HepG2 (cell line): ENCODE measurements at regions of chrX and their contacts with region 1.

Region 1: DNA sequence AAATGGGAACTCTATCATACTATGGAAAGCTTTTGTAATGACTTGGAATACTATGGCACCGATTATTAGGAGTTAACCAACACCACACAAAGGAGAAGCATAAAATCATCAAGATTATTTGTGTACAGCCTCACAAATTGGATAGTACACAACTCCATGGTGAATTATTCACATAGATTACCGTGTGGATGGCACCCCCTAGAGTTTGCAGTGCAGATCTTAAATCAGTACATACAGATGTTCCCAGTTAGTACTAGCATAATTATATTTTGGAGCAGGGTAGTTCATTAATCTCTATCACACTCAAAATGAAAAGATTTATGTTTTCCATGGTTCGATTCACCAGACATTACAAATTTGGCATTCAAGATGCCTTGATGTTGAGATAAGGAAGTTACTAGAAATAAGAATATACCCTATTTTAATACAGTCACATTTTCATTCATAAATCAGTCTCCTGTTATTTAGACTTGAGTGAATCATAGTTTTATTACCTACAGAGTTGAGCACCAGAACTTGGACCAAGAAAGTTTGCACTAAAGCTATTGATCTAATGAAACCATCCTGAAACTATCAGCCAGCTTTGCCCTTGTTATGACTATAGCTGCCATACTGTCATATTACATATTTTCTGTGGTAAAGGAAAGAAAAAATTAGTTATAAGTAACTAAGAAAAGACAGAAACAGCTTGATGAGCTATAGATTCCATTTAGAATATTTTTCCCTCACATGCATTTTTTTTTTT is 531.8 kb downstream of the GLUD2 start:
- DNase-seq: peak; percentile 7
- ATAC-seq: peak; percentile 56; the same call in 2 of the 3 replicates
- H3K4me3 ChIP-seq: no peak overlapping the region
- H3K27ac ChIP-seq: no peak overlapping the region
- H3K4me1 ChIP-seq: no peaks in the 10 kb centered on the region
- H3K27me3 ChIP-seq: no peaks in the 10 kb centered on the region
- CTCF ChIP-seq: peak; percentile 49
- EP300 ChIP-seq: no peak
- POLR2A ChIP-seq: no peak
- RAD21 ChIP-seq: no peak

Region 2: GRCh38 chrX:120790118-120790517 is 789.1 kb before region 1 on chrX:
- CTCF ChIA-PET with region 1: interaction called, 7 read pairs
- POLR2A ChIA-PET with region 1: no interaction called
- in situ Hi-C with region 1: loop called (anchors 10 kb)
- intact Hi-C with region 1: no loop called
- DNase-seq: peak; percentile 40
- ATAC-seq: peak; percentile 30; the same call in 1 of the 3 replicates
- H3K4me3 ChIP-seq: no peak overlapping the region
- H3K27ac ChIP-seq: no peak overlapping the region
- H3K4me1 ChIP-seq: no peaks in the 10 kb centered on the region
- H3K27me3 ChIP-seq: no peaks in the 10 kb centered on the region
- CTCF ChIP-seq: peak; percentile 72
- EP300 ChIP-seq: no peak
- POLR2A ChIP-seq: no peak
- RAD21 ChIP-seq: peak; percentile 58; the same call in 1 of the 2 replicates

Region 3: DNA sequence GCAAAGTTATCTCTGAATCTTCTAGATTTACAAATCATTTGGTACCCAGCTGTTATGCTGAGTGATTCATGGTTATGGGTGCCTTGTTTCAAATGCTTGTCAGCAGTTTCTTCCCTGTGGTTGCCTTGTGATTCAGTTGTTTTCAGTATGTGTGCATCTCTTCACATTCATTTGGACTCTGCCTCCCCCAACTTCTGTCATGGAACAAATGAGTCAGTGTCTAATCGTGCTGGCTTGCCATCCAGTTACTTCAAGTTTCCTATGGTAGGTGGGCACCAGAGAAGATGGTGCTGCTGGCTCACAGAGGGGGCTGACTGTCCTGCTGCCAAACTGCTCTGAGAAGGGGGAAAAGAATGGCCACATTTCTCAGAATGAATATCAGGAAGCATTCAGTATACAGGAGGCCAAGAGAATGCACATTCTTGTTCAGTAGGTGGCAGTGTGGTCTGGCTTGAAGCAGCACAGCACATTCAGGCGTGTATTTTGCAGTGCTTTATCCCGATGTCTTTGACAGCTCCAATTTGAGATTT is 270.8 kb before region 1 on chrX:
- CTCF ChIA-PET with region 1: no interaction called
- POLR2A ChIA-PET with region 1: no interaction called
- in situ Hi-C with region 1: loop called (anchors 25 kb)
- intact Hi-C with region 1: loop called (anchors 1 kb)
- DNase-seq: peak; percentile 6
- ATAC-seq: peak; percentile 85
- H3K4me3 ChIP-seq: no peak overlapping the region
- H3K27ac ChIP-seq: no peak overlapping the region
- H3K4me1 ChIP-seq: no peaks in the 10 kb centered on the region
- H3K27me3 ChIP-seq: no peaks in the 10 kb centered on the region
- CTCF ChIP-seq: peak; percentile 50
- EP300 ChIP-seq: no peak
- POLR2A ChIP-seq: no peak
- RAD21 ChIP-seq: no peak